HepG2 (cell line): ENCODE measurements at regions of chr18 and their contacts with region 1.

Region 1: DNA sequence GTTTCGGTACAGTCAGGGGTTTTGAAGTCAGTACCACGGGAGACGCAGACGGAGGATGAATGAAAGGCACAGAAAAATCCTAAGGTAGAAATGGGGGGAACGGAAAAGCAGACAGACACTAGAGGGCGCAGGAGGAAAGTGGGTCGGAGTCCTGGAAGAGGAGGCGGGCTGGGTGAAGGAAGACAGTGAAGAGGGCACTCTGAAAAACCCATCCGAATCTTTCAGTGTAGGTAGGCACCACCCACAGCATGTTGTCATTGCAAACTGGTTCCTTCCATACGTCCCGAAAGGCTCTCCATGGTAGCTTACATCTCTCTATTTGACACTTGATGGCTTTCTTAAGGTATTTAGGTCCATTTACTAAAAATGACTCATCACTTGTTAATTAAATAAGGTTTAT is 18.5 kb upstream of the ZNF236 start:
- DNase-seq: peak; percentile 44
- ATAC-seq: peak; percentile 36
- H3K4me3 ChIP-seq: no peak overlapping the region
- H3K27ac ChIP-seq: no peak overlapping the region
- H3K4me1 ChIP-seq: peaks cover 21% of the 10 kb centered on the region; the same call in 1 of the 2 replicates
- H3K27me3 ChIP-seq: peaks cover 0 to 6% of the 10 kb centered on the region in 2 experiments; a peak in 1 of 5 replicates
- CTCF ChIP-seq: peak; percentile 87
- EP300 ChIP-seq: no peak
- POLR2A ChIP-seq: no peak
- RAD21 ChIP-seq: no peak

Region 2: DNA sequence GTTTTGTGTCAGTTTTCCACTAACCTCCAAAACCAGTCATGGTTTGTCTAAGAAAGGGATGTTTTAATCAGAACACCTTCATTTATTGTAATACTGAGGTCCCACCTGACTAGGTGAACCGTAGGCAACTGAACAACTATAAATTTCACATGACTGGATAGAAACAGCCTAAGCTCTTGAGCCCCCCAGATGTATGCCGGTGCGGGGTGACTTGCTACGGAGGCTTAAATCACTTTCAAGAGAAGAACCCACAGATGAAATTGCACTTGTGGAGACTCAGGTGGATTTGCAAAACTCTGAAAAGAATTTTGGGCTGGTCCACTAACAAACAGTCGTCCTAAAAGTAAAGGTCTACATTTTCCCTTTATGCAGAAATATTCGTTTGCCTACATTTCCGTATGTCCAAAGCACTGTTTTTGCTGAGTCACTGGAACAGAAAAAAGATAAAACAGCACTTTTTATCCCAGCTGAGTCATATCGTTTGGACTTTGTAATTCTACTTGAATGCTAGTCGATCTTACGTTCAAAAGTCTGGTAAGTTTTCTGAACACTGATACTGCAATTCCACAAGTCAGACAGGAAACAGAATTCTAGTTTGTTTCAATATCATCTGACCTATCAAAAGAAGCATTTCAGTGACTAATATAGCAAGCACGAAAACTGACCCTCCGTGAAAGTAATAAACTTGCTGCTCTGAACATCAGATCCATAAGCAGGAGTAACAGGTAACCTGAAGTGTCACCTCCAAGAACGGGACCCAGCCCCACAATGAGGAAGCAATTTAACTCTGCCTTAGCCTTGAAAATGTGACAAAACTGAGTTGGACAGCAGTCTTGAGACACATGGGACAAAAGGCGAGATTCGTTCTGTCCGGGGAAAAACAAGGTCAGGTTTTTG is 326.9 kb before region 1 on chr18:
- CTCF ChIA-PET with region 1: no interaction called
- POLR2A ChIA-PET with region 1: no interaction called
- in situ Hi-C with region 1: no loop called
- intact Hi-C with region 1: no loop called
- DNase-seq: peak; percentile 88
- ATAC-seq: peak; percentile 58
- H3K4me3 ChIP-seq: peak overlapping the region; percentile 26 to 53 (median 32); a peak in 5 of 6 replicates
- H3K27ac ChIP-seq: peak overlapping the region; percentile 74
- H3K4me1 ChIP-seq: peaks cover 77% of the 10 kb centered on the region
- H3K27me3 ChIP-seq: no peaks in the 10 kb centered on the region
- CTCF ChIP-seq: no peak
- EP300 ChIP-seq: peak in 1 of 2 experiments; percentile 39; a peak in 1 of 4 replicates
- POLR2A ChIP-seq: no peak
- RAD21 ChIP-seq: no peak

Region 3: DNA sequence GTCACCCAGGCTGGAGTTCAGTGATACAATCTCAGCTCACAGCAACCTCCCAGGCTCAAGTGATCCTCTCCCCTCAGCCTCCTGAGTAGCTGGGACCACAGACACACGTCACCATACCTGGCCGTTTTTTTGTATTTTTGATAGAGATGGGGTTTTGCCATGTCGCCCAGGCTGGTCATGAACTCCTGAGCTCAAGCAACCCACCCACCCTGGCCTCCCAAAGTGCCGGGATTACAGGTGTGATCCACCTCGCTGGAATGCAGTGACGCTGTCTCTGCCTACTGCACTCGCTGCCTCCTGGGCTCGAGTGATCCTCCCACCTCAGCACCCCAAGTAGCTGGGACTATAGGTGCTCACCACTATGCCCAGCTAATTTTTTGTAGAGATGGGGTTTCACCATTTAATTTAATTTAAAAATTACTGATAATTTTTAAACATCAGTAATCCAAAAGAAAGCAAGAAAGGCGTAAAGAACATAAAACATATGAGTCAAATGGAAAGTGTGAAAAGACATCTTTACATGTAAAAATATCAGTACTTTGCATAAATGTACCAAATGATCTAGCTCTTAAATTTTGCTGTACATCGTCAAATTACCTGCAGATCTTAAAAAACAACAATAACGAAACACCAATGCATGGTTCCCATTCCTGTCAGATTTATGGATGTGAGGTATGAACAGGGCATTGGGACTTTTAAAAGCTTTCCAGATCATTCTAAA is 15.8 kb after region 1 on chr18:
- CTCF ChIA-PET with region 1: no interaction called
- POLR2A ChIA-PET with region 1: no interaction called
- in situ Hi-C with region 1: no loop called
- intact Hi-C with region 1: loop called (anchors 2 kb)
- DNase-seq: no peak
- ATAC-seq: no peak
- H3K4me3 ChIP-seq: no peak overlapping the region
- H3K27ac ChIP-seq: no peak overlapping the region
- H3K4me1 ChIP-seq: peaks cover 49% of the 10 kb centered on the region
- H3K27me3 ChIP-seq: no peaks in the 10 kb centered on the region; a peak in 1 of 5 replicates
- CTCF ChIP-seq: no peak
- EP300 ChIP-seq: no peak
- POLR2A ChIP-seq: no peak
- RAD21 ChIP-seq: no peak

Region 4: GRCh38 chr18:76875390-76876325 is 71.8 kb after region 1 on chr18:
- CTCF ChIA-PET with region 1: interaction called, 3 read pairs
- POLR2A ChIA-PET with region 1: no interaction called
- in situ Hi-C with region 1: no loop called
- intact Hi-C with region 1: loop called (anchors 1 kb)
- DNase-seq: peak; percentile 48
- ATAC-seq: peak; percentile 86
- H3K4me3 ChIP-seq: no peak overlapping the region
- H3K27ac ChIP-seq: no peak overlapping the region
- H3K4me1 ChIP-seq: no peaks in the 10 kb centered on the region
- H3K27me3 ChIP-seq: no peaks in the 10 kb centered on the region
- CTCF ChIP-seq: peak; percentile 75
- EP300 ChIP-seq: no peak
- POLR2A ChIP-seq: no peak
- RAD21 ChIP-seq: no peak

Region 5: DNA sequence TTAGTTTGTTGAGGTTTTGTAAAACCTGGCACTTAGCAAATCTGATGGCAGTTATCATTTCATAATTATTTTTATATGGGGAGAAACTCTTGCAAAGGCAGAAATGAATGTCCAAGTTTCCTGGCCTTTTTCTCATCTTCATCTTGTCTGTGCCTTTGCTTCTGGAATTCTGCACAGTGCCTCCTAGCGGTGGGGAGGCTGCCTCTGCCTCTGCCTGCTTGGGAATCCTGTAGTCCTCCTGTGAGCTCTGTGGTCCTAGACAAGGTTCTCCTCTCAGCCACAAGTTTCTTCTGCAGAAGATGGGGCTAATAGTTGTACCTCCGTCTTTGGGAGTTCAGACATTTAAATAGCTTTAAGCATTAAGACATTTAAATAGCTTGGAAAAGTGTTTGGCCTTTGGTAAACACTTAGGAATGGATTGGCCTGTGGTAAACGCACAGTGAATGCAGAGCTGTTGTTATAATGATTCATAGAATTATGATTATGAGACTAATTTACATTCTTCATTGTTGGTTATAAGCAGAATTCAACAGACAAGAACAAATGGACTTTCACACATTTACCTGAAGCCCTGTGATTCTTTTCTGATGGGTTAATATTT is 119.8 kb after region 1 on chr18:
- CTCF ChIA-PET with region 1: interaction called, 4 read pairs
- POLR2A ChIA-PET with region 1: no interaction called
- in situ Hi-C with region 1: no loop called
- intact Hi-C with region 1: loop called (anchors 1 kb)
- DNase-seq: peak; percentile 30
- ATAC-seq: peak; percentile 77
- H3K4me3 ChIP-seq: no peak overlapping the region
- H3K27ac ChIP-seq: no peak overlapping the region
- H3K4me1 ChIP-seq: no peaks in the 10 kb centered on the region
- H3K27me3 ChIP-seq: no peaks in the 10 kb centered on the region
- CTCF ChIP-seq: peak; percentile 60
- EP300 ChIP-seq: no peak
- POLR2A ChIP-seq: no peak
- RAD21 ChIP-seq: no peak

Region 6: GRCh38 chr18:76982841-76983587 is 179.2 kb after region 1 on chr18:
- CTCF ChIA-PET with region 1: interaction called, 7 read pairs
- POLR2A ChIA-PET with region 1: no interaction called
- in situ Hi-C with region 1: loop called (anchors 10 kb)
- intact Hi-C with region 1: loop called (anchors 1 kb)
- DNase-seq: peak; percentile 74
- ATAC-seq: peak; percentile 92
- H3K4me3 ChIP-seq: peak overlapping the region in 1 of 3 experiments; percentile 40; a peak in 1 of 6 replicates
- H3K27ac ChIP-seq: no peak overlapping the region
- H3K4me1 ChIP-seq: peaks cover 30% of the 10 kb centered on the region
- H3K27me3 ChIP-seq: no peaks in the 10 kb centered on the region; a peak in 1 of 5 replicates
- CTCF ChIP-seq: peak; percentile 89
- EP300 ChIP-seq: no peak
- POLR2A ChIP-seq: no peak
- RAD21 ChIP-seq: peak; percentile 63

Region 7: DNA sequence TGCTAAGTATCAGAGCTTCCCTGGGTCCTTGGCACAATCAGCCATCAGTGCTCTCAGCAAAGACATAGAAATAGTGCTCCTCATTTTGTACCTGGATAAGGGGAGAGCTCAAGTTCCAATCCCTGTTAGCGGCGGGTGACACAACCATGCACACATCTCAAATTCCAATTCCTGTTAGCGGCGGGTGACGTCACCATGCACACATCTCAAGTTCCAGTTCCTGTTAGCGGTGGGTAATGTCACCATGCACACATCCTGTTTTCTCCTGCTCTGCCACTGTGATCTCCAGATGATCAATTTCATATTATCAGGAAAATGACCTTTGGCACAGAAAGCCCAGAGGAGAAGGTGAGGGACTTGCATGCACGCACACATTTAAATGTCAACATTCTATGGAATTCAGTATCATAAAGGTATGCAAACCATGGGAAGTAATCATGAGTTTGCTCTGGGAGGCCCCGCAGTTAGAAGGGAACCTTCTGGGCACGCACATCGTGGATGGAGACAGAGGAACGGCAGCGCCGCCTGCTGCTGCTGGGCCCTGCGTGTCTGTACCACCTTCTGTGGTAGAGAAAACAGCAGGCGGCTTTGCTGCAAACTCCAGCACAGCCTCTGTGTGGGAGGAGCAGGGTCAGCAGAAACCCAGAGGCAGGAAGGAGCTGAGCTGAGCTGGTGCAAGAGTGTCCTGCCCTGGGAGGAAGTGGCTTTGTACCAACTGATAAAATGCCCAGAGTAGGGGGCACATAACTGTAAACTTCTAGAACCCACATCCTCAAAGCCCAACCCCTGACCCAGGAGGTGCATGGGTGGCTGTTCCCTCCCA is 251.0 kb after region 1 on chr18:
- CTCF ChIA-PET with region 1: no interaction called
- POLR2A ChIA-PET with region 1: no interaction called
- in situ Hi-C with region 1: no loop called
- intact Hi-C with region 1: loop called (anchors 5 kb)
- DNase-seq: peak; percentile 87
- ATAC-seq: peak; percentile 92
- H3K4me3 ChIP-seq: peak overlapping the region in 1 of 3 experiments; percentile 58; a peak in 3 of 6 replicates
- H3K27ac ChIP-seq: peak overlapping the region; percentile 72
- H3K4me1 ChIP-seq: peaks cover 43% of the 10 kb centered on the region
- H3K27me3 ChIP-seq: no peaks in the 10 kb centered on the region
- CTCF ChIP-seq: peak; percentile 93
- EP300 ChIP-seq: peak in 1 of 2 experiments; percentile 28; a peak in 1 of 4 replicates
- POLR2A ChIP-seq: no peak
- RAD21 ChIP-seq: peak; percentile 82